ENCODE measurements at regions of chr3 and their contacts with region 1.

Region 1: GRCh38 chr3:148943506-148944205 is 47.7 kb upstream of the GYG1 start:
- DNase-seq: no peak
- ATAC-seq: peak; percentile 75
- H3K4me3 ChIP-seq: no peak overlapping the region
- H3K27ac ChIP-seq: no peak overlapping the region
- H3K4me1 ChIP-seq: no peaks in the 10 kb centered on the region
- H3K27me3 ChIP-seq: no peaks in the 10 kb centered on the region

Region 2: DNA sequence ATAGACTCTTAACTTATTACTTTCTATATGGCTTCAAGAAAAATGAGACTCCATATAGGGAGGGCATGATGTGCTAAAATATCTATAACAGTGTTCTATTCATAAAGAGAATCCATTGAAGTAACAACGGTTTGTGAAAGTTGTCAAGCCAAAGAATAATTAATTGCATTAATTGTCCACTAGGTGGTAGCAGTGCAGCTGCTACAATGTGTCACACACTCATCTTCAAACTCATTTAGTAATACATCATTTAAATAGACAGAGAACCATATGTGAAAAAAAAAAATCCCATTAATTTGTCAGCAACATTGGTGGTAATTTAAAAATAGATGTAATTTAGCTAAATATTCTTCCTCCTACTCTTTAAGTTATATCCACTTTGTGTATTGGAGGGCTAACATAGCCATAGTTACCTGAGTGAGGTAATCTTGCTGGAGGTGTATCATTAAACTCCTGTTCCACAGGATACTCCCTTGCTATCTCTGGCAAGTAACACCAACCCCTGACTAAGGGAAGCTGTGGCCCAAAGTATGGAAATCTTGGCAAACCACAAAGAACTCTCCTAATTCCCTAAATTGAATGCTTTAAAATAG is 82.3 kb before region 1 on chr3:
- intact Hi-C with region 1: loop called (anchors 2 kb)
- DNase-seq: no peak
- ATAC-seq: no peak
- H3K4me3 ChIP-seq: no peak overlapping the region
- H3K27ac ChIP-seq: no peak overlapping the region
- H3K4me1 ChIP-seq: no peaks in the 10 kb centered on the region
- H3K27me3 ChIP-seq: no peaks in the 10 kb centered on the region

Region 3: DNA sequence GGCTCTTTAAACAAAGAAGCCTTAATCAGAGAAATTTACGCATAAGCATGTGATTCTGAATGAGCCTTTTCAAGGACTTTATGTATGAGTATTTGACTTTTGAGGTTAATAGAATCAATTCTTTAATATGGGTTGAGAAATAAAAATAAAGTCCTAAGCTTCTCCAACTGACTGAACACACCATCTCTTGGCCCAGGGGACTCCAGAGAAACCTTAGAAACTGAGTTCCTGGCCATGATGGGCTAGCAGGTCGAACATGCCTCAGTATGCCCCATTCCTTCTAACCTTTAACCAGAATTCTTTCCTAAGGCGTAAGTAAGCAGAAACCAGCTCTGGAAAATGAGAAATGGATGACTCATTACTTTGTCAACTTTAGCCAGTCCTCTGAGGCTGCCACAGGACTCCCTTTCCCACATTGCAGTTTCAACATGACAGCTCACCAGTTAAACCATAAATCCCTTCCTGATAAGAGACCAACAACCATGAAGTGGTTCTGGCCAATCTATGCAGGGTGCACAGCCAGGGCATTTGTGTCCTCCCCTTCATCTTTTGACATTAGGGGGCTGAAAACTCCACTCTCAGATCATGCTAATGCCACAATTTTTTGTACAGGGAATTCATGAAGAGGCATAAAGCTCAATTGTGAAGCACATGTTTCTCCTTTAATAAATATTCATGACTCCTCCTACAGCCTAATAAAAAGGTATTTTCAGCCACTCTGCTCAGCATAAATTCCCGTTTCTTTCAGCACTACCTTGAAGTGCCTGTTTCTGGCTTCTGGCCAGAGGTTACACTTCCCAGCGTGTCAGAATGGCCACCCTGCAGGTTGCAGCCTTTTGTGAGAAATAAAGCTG is 356.5 kb after region 1 on chr3:
- intact Hi-C with region 1: no loop called
- DNase-seq: no peak
- ATAC-seq: peak; percentile 87
- H3K4me3 ChIP-seq: no peak overlapping the region
- H3K27ac ChIP-seq: peak overlapping the region; percentile 78 to 79
- H3K4me1 ChIP-seq: peaks cover 0 to 2% of the 10 kb centered on the region in 2 donors
- H3K27me3 ChIP-seq: no peaks in the 10 kb centered on the region

Region 4: DNA sequence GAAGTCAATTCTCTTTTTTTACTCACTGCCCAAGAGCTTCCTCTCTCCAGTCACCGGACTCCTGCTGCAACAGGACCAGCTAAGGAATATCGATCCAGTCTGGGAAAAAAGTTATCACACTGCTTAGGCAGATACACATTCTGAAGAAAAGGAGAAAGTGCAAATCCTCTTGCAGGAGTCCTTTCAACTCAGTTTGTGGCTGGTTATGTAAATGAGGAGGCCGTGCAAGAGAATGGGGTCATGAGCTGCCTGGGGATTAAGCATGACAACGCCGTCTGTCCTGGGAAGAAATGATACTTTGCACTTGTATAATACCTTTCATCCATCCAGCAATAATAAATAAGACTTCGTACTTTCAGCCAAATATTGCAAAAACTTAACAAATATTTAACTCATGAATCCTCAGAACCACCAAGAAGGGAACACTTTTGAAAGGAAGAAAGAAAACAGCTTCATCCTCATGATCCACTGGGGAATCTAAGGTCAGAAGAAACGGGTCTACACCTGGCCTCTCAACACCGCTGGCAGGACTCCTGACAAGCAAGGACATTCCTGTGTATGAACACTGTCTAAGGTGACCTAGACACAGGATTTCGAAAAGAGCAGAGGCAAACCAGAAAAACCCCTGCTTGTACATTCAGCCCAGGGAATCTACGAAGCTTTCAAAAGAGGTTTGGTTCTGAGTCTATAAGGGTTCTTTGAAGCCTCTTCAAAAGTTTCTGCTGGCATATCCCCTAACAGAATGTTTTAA is 727.3 kb after region 1 on chr3:
- intact Hi-C with region 1: no loop called
- DNase-seq: no peak
- ATAC-seq: no peak
- H3K4me3 ChIP-seq: no peak overlapping the region
- H3K27ac ChIP-seq: no peak overlapping the region
- H3K4me1 ChIP-seq: no peaks in the 10 kb centered on the region
- H3K27me3 ChIP-seq: no peaks in the 10 kb centered on the region

Measured in aorta (tissue), 5 donors.